ENCODE measurements at regions of chr16 and their contacts with region 1.

Region 1: DNA sequence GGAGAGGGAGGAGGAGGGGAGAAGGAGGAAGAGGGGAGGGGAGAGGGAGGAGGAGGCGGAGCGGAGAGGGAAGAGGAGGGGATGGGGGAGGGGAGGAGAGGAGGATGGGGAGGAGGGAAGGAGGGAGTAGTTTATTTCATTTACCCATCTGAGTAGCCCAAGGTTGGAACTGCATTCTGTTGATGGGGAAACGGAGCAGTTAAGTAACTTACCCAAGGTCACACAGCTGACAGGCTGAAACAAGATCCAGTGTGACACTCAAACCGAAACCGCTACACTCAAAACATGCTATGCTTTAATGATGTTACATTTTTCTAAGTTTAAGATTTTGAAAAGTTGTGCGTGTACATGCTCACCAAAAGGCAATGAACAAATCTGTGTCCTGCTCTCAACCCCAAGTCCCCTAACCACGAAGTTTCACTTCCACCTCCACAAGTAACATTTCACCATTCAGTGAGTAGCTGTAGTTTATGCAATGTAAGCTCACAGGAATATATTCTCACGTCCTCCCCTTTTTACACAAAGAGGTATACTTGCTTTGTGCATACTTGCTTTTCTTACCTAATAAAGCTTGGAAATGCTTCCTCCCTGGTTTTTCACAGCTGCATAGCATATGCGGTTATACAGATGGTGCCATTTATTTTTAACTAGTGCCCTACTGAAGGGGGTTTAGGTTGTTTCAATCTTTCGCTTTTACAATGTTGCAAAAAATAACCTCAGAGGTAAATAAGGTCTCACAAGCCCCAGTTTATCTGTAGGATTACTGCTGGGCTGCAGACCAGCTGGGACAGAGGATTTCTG is 275.3 kb downstream of the PARN start:
- DNase-seq: no peak
- ATAC-seq: peak; percentile 33

Region 2: DNA sequence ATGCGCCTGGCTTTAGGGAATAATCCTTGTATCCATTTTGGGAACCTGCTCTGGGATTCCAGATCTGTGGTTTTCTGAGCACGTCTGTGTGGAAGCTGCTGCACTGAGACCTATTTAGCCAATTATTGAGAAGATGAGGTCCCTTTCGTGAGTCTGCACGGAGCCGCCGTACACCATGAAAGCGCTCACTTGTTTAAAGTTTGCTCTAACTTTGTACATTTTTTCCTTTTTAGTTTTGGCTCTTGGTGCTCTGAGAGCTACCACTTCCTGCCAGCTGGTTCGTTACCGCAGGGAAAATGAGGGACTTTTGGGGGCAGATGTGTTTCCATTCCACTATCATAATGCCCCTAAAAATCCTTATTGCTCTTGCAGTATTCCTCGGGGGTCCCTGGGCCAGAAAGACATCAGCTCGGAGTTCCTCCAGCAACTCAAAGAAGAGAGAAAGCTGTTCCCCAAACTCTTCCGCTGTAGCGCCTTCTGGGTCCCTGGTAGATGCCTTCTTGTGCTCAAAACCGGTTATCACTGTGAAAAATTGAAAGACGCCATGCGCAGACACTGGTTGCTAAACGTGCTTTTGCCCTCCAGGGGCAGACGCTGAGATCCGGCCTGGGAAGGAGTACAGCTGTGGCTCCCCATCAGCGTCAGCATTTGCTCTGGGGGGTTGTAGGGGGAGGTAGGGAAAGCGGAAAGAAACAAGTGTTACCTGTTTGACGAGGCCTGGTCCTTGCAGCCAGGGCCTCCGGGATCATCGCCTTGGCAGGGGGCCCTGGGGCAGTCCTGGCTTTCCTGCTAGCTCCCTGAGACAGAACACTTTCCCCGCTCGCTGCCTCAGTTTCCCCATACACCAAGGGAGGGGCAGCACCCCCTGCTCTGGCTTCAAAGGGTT is 45.5 kb before region 1 on chr16:
- intact Hi-C with region 1: loop called (anchors 5 kb)
- DNase-seq: no peak
- ATAC-seq: no peak